ENCODE measurements at regions of chr5 and their contacts with region 1.

Region 1: DNA sequence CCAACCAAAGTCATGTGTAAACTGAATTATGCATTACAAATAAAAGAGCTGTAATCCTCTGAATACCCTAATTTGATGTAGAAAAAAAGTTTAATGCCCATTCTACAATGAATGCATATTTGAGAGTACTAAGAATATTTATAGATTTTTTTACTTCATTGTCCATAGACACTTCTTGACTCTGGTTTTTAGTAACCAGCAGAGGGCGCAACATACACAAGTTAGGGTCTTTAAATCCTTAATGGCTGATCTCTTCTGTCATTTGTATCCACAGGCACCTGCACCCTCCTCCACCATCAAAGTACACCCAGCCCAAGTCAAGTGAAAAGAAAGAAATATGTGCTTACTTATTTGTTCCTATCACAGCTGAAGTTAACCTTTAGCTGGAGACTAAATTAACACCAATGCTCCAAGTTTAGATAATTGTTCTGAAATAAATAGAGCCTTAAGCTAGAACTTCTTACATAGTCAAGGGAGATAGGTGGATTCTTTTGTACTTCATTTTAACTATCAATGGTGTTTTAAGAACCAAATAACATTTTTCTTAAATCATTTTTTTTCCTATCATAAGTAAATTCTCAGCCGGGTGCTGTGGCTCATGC is 524.2 kb upstream of the DAB2 start:
- DNase-seq: peak; percentile 77
- H3K4me3 ChIP-seq: no peak overlapping the region
- H3K27ac ChIP-seq: no peak overlapping the region
- H3K4me1 ChIP-seq: no peaks in the 10 kb centered on the region
- H3K27me3 ChIP-seq: no peaks in the 10 kb centered on the region
- CTCF ChIP-seq: peak; percentile 49 to 55
- POLR2A ChIP-seq: no peak

Region 2: GRCh38 chr5:39714036-39714698 is 234.8 kb before region 1 on chr5:
- CTCF ChIA-PET with region 1: interaction called, 26 read pairs
- POLR2A ChIA-PET with region 1: no interaction called
- dilution Hi-C with region 1: no loop called
- intact Hi-C with region 1: loop called (anchors 2 kb)
- DNase-seq: peak; percentile 84
- H3K4me3 ChIP-seq: no peak overlapping the region
- H3K27ac ChIP-seq: no peak overlapping the region
- H3K4me1 ChIP-seq: no peaks in the 10 kb centered on the region
- H3K27me3 ChIP-seq: no peaks in the 10 kb centered on the region
- CTCF ChIP-seq: peak; percentile 42 to 65
- POLR2A ChIP-seq: no peak

Region 3: DNA sequence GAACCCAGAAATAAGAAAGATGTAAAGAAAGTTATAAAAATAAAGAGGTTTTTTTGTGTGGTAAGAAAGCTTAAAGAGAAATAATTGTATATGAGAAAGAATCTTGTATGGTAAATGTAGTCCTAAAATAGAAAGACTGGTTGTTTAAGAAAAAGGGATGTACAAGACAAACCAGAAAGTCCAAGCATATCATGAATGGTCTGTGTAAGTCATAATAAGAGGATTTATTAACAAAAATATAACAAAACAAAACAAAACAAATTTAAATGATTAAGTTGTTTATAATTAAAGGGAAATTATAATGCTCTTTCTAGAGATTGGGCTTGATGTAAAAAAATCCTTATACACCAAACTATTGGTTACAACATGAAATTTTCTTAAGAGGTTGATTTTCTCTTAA is 140.3 kb after region 1 on chr5:
- CTCF ChIA-PET with region 1: no interaction called
- POLR2A ChIA-PET with region 1: no interaction called
- dilution Hi-C with region 1: no loop called
- intact Hi-C with region 1: no loop called
- DNase-seq: no peak
- H3K4me3 ChIP-seq: no peak overlapping the region
- H3K27ac ChIP-seq: no peak overlapping the region
- H3K4me1 ChIP-seq: no peaks in the 10 kb centered on the region
- H3K27me3 ChIP-seq: no peaks in the 10 kb centered on the region
- CTCF ChIP-seq: no peak
- POLR2A ChIP-seq: no peak

Region 4: DNA sequence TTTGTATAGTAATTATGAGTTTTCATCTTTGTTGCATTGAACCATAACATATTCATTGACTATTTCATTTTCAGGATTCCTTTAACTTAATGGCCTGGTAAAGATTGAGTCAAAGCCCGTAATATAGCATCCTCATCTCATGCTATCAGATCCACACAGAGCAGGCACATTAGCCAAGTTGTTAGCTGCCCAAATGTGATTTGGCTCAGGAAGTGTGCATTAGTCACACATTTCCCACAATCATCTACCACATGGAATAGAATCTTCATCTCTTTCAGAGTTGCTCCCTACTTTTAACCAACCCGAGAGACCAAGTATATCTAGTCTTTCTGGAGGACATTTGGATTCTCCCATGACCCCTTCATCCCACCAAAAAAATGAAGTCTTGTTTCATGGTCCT is 249.8 kb after region 1 on chr5:
- CTCF ChIA-PET with region 1: no interaction called
- POLR2A ChIA-PET with region 1: no interaction called
- dilution Hi-C with region 1: no loop called
- intact Hi-C with region 1: loop called (anchors 2 kb)
- DNase-seq: peak; percentile 87
- H3K4me3 ChIP-seq: no peak overlapping the region
- H3K27ac ChIP-seq: peak overlapping the region; percentile 33
- H3K4me1 ChIP-seq: peaks cover 33% of the 10 kb centered on the region
- H3K27me3 ChIP-seq: no peaks in the 10 kb centered on the region
- CTCF ChIP-seq: no peak
- POLR2A ChIP-seq: no peak

Region 5: DNA sequence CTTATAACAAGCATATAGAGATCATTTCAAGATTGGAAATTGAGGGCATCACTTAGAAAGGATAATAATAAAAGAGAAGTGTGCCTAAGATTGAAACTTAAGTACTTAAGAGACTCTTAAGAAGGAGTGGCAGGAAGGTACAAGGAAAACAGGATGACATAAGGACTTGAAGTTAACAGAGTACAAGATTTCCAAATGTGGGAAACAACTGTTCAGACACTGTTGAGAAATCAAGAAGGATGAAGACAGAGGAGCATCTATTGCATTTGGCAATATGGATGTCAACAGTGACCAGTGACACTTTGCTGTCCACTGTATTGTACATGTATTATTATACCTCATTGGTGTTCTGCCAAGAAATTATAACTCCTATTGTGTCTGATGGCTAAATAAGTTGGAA is 573.0 kb after region 1 on chr5:
- CTCF ChIA-PET with region 1: interaction called, 3 read pairs
- POLR2A ChIA-PET with region 1: no interaction called
- dilution Hi-C with region 1: no loop called
- intact Hi-C with region 1: loop called (anchors 5 kb)
- DNase-seq: no peak
- H3K4me3 ChIP-seq: peak overlapping the region in 2 of 3 experiments; percentile 17 to 23
- H3K27ac ChIP-seq: no peak overlapping the region
- H3K4me1 ChIP-seq: peaks cover 9% of the 10 kb centered on the region
- H3K27me3 ChIP-seq: peaks cover 2 to 27% of the 10 kb centered on the region in 2 experiments
- CTCF ChIP-seq: no peak
- POLR2A ChIP-seq: no peak

Region 6: DNA sequence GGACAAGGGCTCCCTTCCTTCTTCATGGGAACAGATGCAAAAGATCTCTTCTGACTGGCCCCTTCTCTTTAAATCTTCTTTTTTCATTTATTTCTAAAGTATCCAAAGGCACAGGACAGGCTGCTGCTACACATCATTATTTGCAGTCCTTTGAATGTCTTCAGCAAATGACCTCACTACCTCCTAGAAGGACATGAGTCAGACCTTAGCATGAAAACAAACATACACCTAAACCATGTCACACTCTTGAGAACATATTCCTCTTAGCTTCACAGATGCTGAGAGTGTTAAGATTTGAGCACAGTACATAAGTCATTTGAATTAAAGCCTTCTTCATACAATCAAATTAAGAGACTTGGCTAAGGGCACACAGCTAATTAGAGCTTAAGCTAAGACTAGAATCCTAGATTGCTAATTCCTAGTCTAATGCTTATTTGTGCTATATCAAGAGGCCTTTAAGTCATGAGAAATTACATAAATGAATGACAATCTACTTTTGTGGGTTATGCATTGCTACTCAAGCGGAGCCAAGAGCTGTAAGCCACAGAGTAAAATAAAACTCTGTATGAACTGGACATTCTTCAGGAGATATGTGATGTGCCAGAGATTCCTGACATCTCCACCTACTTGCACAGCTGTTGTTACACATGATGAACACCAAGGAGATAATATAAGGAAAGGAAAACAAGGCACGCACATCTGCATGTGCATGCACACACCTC is 621.6 kb after region 1 on chr5:
- CTCF ChIA-PET with region 1: no interaction called
- POLR2A ChIA-PET with region 1: no interaction called
- dilution Hi-C with region 1: no loop called
- intact Hi-C with region 1: loop called (anchors 2 kb)
- DNase-seq: peak; percentile 73
- H3K4me3 ChIP-seq: no peak overlapping the region
- H3K27ac ChIP-seq: peak overlapping the region; percentile 72
- H3K4me1 ChIP-seq: peaks cover 18% of the 10 kb centered on the region
- H3K27me3 ChIP-seq: no peaks in the 10 kb centered on the region
- CTCF ChIP-seq: no peak
- POLR2A ChIP-seq: no peak

Region 7: DNA sequence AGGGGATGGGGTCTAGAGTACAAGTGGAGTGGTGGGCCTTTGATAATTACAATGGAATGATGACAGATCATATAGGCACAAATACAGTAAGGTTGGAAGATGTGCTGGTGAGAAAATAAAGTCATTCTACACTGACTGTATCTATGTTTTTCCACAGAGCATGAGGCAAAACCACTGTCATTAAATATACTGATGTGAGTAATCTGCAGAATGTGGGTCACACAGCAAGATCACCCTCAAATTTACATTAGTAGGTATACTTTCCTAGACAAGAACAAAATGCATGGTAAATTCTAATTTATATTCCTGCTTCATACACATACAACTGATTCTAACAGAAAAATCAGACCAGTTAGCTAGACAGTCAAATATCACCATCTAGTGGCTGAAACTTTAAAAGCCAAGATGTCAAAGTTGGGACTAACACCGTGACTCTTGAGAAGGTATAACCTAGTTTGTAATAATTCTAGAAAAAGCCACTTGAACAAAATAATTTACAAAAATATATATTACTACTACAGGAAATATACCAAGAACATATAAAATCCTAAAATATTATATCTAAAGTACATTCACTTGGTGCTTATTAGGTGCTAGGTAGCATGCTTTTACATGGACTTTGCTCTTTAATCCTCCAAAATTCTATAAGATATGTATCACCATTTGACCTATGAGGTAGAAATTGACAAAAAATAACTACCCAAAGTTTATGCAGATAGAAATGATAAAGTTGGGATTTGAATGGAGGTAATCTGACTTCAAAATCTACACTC is 787.3 kb after region 1 on chr5:
- CTCF ChIA-PET with region 1: interaction called, 31 read pairs
- POLR2A ChIA-PET with region 1: no interaction called
- dilution Hi-C with region 1: no loop called
- intact Hi-C with region 1: loop called (anchors 1 kb)
- DNase-seq: peak; percentile 84
- H3K4me3 ChIP-seq: no peak overlapping the region
- H3K27ac ChIP-seq: peak overlapping the region; percentile 84
- H3K4me1 ChIP-seq: peaks cover 36% of the 10 kb centered on the region
- H3K27me3 ChIP-seq: no peaks in the 10 kb centered on the region
- CTCF ChIP-seq: peak; percentile 40 to 50
- POLR2A ChIP-seq: no peak

Measured in endothelial cell of umbilical vein (primary cell).